ENCODE measurements at regions of chr3 and their contacts with region 1.

Region 1: DNA sequence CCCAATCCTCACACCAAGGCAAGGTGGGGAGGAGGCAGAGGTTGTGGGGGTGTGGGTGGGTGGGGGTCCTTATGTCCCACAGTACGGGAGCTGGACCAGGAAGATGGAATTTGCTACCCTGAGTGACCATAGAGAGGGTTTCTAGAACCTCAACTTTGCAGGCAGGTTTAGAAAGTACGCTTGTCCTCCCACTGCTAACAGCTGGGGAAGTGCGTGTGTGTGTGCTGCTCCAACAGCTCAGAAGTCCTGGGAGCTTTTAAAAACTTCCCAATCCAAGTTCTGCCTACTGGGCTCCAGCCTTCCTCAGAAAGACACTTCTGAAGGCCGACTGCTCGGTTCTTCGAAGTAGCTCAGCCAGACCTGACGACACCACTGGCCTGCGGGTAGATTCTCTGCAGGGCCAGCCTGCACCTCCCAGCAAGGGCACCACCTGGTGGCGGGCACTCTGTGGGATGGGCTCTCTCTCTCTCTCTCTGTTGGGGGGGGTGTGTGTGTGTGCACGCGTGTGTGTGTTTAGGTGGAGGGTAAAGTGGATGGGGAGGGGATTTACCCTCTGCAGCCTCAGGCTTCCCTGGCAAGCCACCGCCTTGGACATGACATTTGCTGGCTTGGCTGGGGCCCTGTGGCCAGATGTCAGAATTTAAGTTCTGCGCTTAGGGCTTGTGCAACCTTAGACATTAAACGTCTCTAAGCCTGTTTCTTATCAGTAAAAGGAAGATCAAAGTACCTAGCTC is 15.6 kb downstream of the TMEM158 start:
- DNase-seq: peak; percentile 80 to 87
- H3K4me3 ChIP-seq: no peak overlapping the region
- H3K27ac ChIP-seq: peak overlapping the region; percentile 83 to 89
- H3K4me1 ChIP-seq: peaks cover 5 to 7% of the 10 kb centered on the region in 2 donors
- H3K27me3 ChIP-seq: no peaks in the 10 kb centered on the region
- CTCF ChIP-seq: peak; percentile 55 to 81 (median 75)
- POLR2A ChIP-seq: no peak

Region 2: GRCh38 chr3:44893097-44893496 is 317.4 kb before region 1 on chr3:
- intact Hi-C with region 1: no loop called
- DNase-seq: no peak
- H3K4me3 ChIP-seq: no peak overlapping the region
- H3K27ac ChIP-seq: no peak overlapping the region
- H3K4me1 ChIP-seq: no peaks in the 10 kb centered on the region
- H3K27me3 ChIP-seq: no peaks in the 10 kb centered on the region
- CTCF ChIP-seq: no peak
- POLR2A ChIP-seq: no peak

Region 3: DNA sequence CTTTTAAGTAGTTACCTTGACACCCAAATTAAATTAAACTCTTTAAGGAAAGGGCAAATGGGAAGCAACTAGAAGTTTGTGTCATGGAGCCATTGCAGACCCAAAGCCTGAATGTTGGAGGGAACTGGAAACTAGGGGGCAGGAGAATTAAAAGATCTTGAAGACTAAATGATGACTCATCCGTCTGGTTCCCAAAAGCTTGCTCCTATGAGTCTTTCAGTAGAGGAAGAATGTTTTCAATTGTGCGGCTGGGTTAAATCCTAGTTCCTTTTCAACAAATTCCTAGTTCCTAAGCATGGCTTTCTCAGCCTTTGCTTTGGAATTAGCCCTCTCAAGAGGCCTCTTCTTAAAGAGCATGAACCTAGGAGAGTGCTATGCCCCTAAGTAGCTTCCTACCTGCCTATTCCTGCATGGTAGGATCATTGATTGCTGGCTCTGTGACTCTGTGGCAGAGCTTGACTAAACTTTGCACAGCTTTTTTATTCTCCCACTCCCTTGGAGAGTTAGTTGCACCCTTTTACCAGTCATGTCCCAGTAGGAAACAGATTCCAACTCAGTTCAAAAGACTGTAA is 166.7 kb before region 1 on chr3:
- intact Hi-C with region 1: loop called (anchors 10 kb)
- DNase-seq: peak in 1 of 2 donors; percentile 35
- H3K4me3 ChIP-seq: no peak overlapping the region
- H3K27ac ChIP-seq: peak overlapping the region; percentile 51 to 72
- H3K4me1 ChIP-seq: no peaks in the 10 kb centered on the region
- H3K27me3 ChIP-seq: no peaks in the 10 kb centered on the region
- CTCF ChIP-seq: peak; percentile 17 to 45 (median 28)
- POLR2A ChIP-seq: no peak

Region 4: DNA sequence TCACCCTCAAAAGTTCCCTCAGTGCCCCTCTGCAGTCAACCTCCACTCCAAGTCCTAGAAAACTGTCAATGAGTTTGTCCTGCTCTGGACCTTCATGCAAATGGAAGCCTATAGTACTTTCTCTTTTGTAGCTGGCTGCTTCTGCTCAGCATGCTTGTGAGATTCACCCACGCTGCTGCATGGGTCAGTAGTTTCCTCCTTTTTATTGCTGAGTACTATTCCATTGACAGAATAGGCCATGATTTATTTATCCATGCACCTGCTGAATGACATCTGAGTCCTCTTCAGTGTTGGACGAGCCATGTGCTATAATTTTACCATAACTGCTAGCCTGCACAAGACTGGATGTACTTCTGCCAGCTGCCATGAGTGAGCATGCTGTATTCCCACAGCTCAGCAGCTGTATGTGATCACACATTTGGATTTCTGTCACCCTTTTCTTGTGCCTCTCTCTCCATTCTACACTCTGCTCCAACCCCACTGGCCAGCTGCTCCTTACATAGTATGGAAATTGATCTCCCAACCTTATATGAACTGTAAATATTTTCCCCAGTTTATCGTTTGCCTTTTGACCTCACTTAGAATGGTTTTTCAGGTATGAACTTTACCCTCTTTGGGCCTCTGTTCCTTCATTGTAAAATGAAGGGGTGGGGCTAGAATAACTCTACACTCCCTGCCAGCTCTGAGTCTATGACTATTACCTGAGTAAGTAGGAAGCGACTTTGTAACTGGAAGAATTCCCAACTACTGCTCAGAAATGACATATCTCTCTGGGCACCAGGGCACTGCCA is 90.5 kb before region 1 on chr3:
- intact Hi-C with region 1: loop called (anchors 5 kb)
- DNase-seq: no peak
- H3K4me3 ChIP-seq: no peak overlapping the region
- H3K27ac ChIP-seq: peak overlapping the region; percentile 82 to 87
- H3K4me1 ChIP-seq: peaks cover 0 to 5% of the 10 kb centered on the region in 2 donors
- H3K27me3 ChIP-seq: no peaks in the 10 kb centered on the region
- CTCF ChIP-seq: no peak
- POLR2A ChIP-seq: no peak

Measured in uterus (tissue), 4 donors.